CD8-positive, alpha-beta T cell (primary cell): ENCODE measurements at regions of chr3 and their contacts with region 1.

Region 1: GRCh38 chr3:10248184-10249080 is at the start of gene TATDN2:
- DNase-seq: peak; percentile 75 to 98 (median 91)
- ATAC-seq: peak; percentile 92
- H3K4me3 ChIP-seq: peak within 1 kb of the TSS; percentile 86 to 92
- H3K4me3 Mint-ChIP-seq: peak within 1 kb of the TSS; percentile 97
- H3K27ac ChIP-seq: peak within 1 kb of the TSS; percentile 64 to 76
- H3K27ac Mint-ChIP-seq: peak within 1 kb of the TSS; percentile 93
- H3K4me1 ChIP-seq: peaks cover 32% of the 10 kb centered on the region
- H3K4me1 Mint-ChIP-seq: peaks cover 52% of the 10 kb centered on the region
- H3K27me3 ChIP-seq: no peaks in the 10 kb centered on the region
- H3K27me3 Mint-ChIP-seq: no peaks in the 10 kb centered on the region
- CTCF ChIP-seq: no peak
- total RNA-seq, gene TATDN2: 40.2 to 40.3 TPM

Region 2: DNA sequence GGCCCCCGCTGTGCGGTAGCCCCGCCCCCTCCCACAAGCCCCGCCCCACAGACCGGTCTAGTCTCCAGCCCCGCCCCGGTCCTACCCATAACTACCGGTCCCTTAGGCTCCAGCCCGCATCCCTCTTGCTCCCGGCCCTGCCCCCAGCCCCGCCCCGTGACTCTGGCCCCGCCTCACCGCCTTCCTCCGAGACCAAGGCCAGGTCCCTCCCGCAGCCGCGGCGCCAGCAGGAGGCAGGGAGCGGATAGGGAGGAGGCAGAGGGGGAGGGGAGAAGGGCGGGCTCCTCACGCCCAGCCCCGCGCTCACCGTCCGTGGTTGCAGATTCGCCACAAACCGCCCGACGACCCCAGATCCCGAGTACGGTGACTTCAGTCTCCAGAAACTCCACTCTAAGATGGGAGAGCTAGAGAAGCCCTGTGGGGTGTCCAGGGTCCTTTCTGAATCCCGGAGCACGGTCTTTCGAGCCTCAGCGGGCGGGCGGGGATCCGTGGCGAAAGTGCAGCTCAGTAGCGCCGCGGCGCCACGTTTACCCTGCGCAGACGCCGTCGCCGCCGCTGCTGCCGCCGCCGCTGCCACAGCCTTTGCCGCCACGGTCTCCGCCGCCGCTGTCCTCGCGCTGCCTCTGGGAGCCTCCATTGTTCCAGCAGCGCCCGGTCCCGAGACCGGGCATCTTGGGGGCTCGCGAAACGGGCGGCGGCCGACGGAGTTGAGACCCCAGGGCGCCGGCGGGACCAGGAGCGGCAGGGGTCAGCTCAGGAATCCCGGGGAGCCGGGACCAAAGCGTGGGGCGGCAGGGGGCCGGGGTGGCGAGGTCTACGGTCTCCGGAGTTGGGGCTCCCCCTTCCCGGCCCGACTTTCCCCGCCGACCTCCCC is 517.0 kb before region 1 on chr3 and contains the start of gene BRPF1:
- CTCF ChIA-PET with region 1: no interaction called
- POLR2A ChIA-PET with region 1: no interaction called
- intact Hi-C with region 1: loop called in 1 of 2 experiments (anchors 1 kb)
- DNase-seq: peak; percentile 98 to 100 (median 99)
- ATAC-seq: peak; percentile 94
- H3K4me3 ChIP-seq: peak within 1 kb of the TSS; percentile 91 to 92
- H3K4me3 Mint-ChIP-seq: peak within 1 kb of the TSS; percentile 91
- H3K27ac ChIP-seq: peak within 1 kb of the TSS; percentile 83 to 97
- H3K27ac Mint-ChIP-seq: peak within 1 kb of the TSS; percentile 93
- H3K4me1 ChIP-seq: peaks cover 48% of the 10 kb centered on the region
- H3K4me1 Mint-ChIP-seq: peaks cover 66% of the 10 kb centered on the region
- H3K27me3 ChIP-seq: no peaks in the 10 kb centered on the region
- H3K27me3 Mint-ChIP-seq: no peaks in the 10 kb centered on the region
- CTCF ChIP-seq: no peak
- total RNA-seq, gene BRPF1: 22.0 to 25.8 TPM

Region 3: DNA sequence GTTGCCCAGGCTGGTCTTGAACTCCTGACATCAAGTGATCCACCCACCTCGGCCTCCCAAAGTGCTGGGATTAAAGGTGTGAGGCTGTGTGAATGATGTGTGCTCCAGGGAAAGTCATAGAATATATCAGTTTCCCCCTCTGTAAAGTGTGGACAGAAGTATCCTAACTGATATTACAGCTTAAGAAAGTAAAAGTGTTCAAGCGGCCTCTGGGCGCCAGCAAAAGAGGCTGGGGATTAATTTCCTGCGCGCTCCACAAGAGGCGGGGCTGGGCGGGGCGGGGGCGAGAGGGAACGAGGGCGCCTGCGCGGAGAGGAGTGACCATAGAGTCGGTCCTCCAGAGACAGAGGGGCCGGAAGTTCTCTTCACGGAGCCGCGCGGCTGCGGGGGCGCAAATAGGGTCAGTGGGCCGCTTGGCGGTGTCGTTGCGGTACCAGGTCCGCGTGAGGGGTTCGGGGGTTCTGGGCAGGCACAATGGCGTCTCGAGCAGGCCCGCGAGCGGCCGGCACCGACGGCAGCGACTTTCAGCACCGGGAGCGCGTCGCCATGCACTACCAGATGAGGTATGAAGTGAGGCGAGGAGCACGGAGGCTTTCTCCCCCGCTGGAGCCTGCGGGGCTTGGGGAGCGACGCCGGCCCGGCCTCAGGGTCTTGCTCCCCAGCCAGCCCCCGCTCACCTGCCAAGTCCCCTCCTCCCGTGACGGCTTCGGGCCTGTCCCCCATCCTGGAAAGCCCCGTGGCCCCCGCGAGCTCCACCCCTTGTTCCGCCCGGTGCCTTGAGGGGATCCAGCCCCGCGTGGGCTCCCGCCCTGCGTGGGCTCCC is 358.0 kb before region 1 on chr3 and contains the start of gene JAGN1:
- CTCF ChIA-PET with region 1: no interaction called
- POLR2A ChIA-PET with region 1: no interaction called
- intact Hi-C with region 1: loop called in 1 of 2 experiments (anchors 2 kb)
- DNase-seq: peak; percentile 86 to 94 (median 91)
- ATAC-seq: peak; percentile 92
- H3K4me3 ChIP-seq: peak within 1 kb of the TSS; percentile 95 to 96
- H3K4me3 Mint-ChIP-seq: peak within 1 kb of the TSS; percentile 98
- H3K27ac ChIP-seq: peak within 1 kb of the TSS; percentile 99 to 100
- H3K27ac Mint-ChIP-seq: peak within 1 kb of the TSS; percentile 100
- H3K4me1 ChIP-seq: peaks cover 16% of the 10 kb centered on the region
- H3K4me1 Mint-ChIP-seq: peaks cover 40% of the 10 kb centered on the region
- H3K27me3 ChIP-seq: no peaks in the 10 kb centered on the region
- H3K27me3 Mint-ChIP-seq: no peaks in the 10 kb centered on the region
- CTCF ChIP-seq: no peak
- total RNA-seq, gene JAGN1: 13.4 to 14.5 TPM

Region 4: GRCh38 chr3:10026084-10026890 is 222.1 kb before region 1 on chr3 and contains the start of gene FANCD2:
- CTCF ChIA-PET with region 1: no interaction called
- POLR2A ChIA-PET with region 1: no interaction called
- intact Hi-C with region 1: loop called in 1 of 2 experiments (anchors 1 kb)
- DNase-seq: peak; percentile 87 to 97 (median 93)
- ATAC-seq: peak; percentile 92
- H3K4me3 ChIP-seq: peak within 1 kb of the TSS; percentile 76 to 82
- H3K4me3 Mint-ChIP-seq: peak within 1 kb of the TSS; percentile 98
- H3K27ac ChIP-seq: peak within 1 kb of the TSS; percentile 84
- H3K27ac Mint-ChIP-seq: peak within 1 kb of the TSS; percentile 96
- H3K4me1 ChIP-seq: peaks cover 18% of the 10 kb centered on the region
- H3K4me1 Mint-ChIP-seq: peaks cover 27% of the 10 kb centered on the region
- H3K27me3 ChIP-seq: no peaks in the 10 kb centered on the region
- H3K27me3 Mint-ChIP-seq: no peaks in the 10 kb centered on the region
- CTCF ChIP-seq: no peak
- total RNA-seq, gene FANCD2: 15.8 to 17.7 TPM

Region 5: GRCh38 chr3:10164546-10165393 is 83.7 kb before region 1 on chr3 and contains the start of gene IRAK2:
- CTCF ChIA-PET with region 1: interaction called, 3 read pairs
- POLR2A ChIA-PET with region 1: no interaction called
- intact Hi-C with region 1: loop called in 1 of 2 experiments (anchors 2 kb)
- DNase-seq: peak; percentile 18 to 77 (median 52)
- ATAC-seq: peak; percentile 87
- H3K4me3 ChIP-seq: peak within 1 kb of the TSS; percentile 90 to 91
- H3K4me3 Mint-ChIP-seq: peak within 1 kb of the TSS; percentile 82
- H3K27ac ChIP-seq: peak within 1 kb of the TSS; percentile 48 to 59
- H3K27ac Mint-ChIP-seq: peak within 1 kb of the TSS; percentile 52
- H3K4me1 ChIP-seq: peaks cover 16% of the 10 kb centered on the region
- H3K4me1 Mint-ChIP-seq: peaks cover 19% of the 10 kb centered on the region
- H3K27me3 ChIP-seq: no peaks in the 10 kb centered on the region
- H3K27me3 Mint-ChIP-seq: no peaks in the 10 kb centered on the region
- CTCF ChIP-seq: peak; percentile 97
- total RNA-seq, gene IRAK2: 1.6 to 1.7 TPM

Region 6: GRCh38 chr3:10322352-10322710 is 73.9 kb after region 1 on chr3:
- CTCF ChIA-PET with region 1: no interaction called
- POLR2A ChIA-PET with region 1: no interaction called
- intact Hi-C with region 1: loop called in 1 of 2 experiments (anchors 1 kb)
- DNase-seq: peak in 2 of 9 experiments; percentile 37 to 47
- ATAC-seq: no peak
- H3K4me3 ChIP-seq: no peak overlapping the region
- H3K4me3 Mint-ChIP-seq: peak overlapping the region; percentile 18
- H3K27ac ChIP-seq: no peak overlapping the region
- H3K27ac Mint-ChIP-seq: no peak overlapping the region
- H3K4me1 ChIP-seq: peaks cover 16% of the 10 kb centered on the region
- H3K4me1 Mint-ChIP-seq: peaks cover 29% of the 10 kb centered on the region
- H3K27me3 ChIP-seq: no peaks in the 10 kb centered on the region
- H3K27me3 Mint-ChIP-seq: peaks cover 3% of the 10 kb centered on the region
- CTCF ChIP-seq: peak; percentile 31